PC-9 (cell line): ENCODE measurements at regions of chr1 and their contacts with region 1.

Region 1: DNA sequence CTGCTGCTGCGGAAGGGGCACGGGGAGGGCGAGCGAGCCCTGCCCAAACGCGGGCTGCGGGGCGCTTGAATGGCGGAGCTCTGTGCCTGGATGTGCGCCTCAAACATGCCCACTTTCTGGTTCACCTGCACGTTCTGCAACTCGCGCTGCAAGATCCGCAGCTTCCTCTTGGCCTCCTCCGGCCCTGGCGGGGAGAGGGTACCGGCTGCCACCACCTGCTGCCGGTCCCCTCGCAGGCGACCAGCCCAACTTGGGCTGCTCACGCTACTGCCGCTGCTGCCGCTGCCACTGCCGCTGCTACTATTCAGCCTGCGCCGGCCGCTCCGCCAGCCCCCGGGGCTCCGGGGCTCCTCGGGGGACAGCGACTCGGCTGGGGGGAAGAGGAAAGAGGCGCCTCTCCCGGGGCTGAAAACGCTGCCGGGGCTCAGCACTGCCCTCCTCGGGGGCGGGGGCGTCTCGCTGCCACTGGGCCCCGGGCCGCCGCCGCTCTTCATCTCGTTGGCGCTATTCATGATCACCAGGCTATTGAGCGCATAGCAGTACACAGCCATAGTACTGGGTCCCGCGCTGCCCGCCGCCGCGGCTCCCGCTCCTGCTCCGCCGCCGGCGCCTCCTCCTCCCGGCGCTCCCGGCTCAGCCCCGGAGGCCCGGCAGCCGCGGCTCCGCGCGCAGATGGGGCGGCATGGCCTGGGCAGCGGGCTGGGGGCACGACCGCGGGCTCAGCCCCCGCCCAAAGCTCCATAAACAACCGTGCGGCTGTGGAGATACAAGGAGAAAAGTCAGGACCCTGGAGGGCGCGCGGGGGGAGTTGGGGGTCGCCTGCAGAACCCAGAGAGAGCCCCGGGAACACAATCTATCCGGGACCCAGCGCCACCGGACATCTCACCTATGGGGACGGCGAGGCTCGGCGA is 1.9 kb downstream of the ITPKB start:
- DNase-seq: peak in 1 of 2 experiments; percentile 7
- H3K4me3 ChIP-seq: peak overlapping the region; percentile 92
- H3K27ac ChIP-seq: no peak overlapping the region
- H3K4me1 ChIP-seq: peaks cover 16% of the 10 kb centered on the region
- H3K27me3 ChIP-seq: no peaks in the 10 kb centered on the region
- CTCF ChIP-seq: no peak

Region 2: DNA sequence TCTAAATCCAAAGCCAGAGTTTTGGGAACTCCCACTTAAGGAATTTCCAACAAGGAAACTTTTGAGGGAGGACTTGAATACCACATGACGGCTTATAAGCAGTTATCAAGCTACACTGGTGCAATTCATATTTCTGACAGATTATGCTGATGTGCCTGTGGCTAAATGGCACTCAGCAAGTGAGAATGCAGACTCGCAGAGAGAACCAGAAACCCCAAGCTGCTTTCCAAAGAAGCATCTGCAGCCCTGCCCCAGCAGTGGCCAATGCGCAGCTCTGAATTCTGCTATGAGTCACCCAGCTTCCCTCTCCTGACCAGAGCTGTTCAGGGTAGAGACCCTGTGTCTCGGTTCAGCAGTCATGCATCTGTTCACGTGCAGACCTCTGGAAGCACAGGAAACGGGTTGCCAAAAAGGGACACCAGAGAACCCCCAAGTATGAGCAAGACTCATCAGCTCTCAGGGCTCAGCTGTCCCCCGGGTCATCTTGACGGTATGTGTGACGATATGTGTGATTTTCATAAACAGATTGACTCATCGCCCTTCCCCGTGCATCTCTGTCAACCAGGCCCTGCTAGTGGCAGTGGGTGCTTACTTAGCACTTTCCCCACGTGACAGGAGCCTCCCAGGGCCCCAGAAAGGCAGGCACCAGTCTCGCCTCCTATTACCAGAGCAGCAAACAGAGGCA is 74.4 kb before region 1 on chr1:
- CTCF ChIA-PET with region 1: no interaction called
- POLR2A ChIA-PET with region 1: no interaction called
- intact Hi-C with region 1: loop called (anchors 5 kb)
- DNase-seq: peak; percentile 82 to 92
- H3K4me3 ChIP-seq: peak overlapping the region; percentile 38; the same call in 1 of the 2 replicates
- H3K27ac ChIP-seq: peak overlapping the region; percentile 59
- H3K4me1 ChIP-seq: peaks cover 42% of the 10 kb centered on the region
- H3K27me3 ChIP-seq: no peaks in the 10 kb centered on the region
- CTCF ChIP-seq: no peak

Region 3: DNA sequence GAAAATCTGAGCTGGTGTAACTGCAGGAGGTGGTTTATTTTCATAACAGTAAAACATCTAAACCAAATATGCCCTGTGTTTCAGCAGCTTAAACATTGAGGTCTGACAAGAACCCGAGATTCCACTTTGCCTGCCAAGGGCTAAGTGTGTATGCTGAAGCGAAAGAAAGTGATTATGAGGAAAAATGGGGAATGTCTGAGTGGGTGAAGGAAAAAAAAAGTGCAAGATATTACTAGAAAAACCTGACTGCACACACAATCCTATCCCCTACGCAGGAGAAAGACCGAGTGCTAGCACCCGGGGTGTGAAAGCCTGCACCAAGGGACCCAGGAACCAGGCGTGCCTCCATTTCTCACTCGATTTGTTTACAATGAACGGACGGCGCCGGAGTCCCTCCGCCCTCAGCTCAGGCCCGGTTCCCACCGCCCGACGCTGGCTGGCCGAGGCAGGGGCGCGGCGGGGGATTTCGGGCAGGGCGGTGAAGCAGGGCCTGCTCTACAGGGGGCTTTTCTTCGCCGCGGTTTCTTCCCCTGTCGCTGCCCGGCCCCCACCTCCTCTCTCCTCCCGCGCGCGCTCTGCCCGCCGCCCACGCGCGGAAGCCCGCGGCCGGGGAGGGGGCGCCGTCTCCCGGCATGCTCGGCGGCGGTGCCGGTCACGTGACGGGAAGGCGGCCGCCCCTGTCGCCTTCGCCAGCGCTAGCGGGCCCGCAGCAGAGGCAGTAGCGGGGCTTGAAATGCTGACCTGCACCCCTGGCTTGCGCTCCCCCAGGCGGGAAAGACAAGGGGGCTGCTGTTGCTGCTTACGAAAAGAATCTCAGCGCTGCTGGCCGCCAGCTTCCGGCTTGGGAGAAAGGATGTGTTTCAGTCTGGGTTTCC is 34.0 kb before region 1 on chr1:
- CTCF ChIA-PET with region 1: no interaction called
- POLR2A ChIA-PET with region 1: interaction called, 18 read pairs
- intact Hi-C with region 1: no loop called
- DNase-seq: peak in 1 of 2 experiments; percentile 66
- H3K4me3 ChIP-seq: peak overlapping the region; percentile 83
- H3K27ac ChIP-seq: peak overlapping the region; percentile 62
- H3K4me1 ChIP-seq: peaks cover 14% of the 10 kb centered on the region
- H3K27me3 ChIP-seq: no peaks in the 10 kb centered on the region
- CTCF ChIP-seq: no peak

Region 4: GRCh38 chr1:226814751-226815496 is 77.8 kb after region 1 on chr1:
- CTCF ChIA-PET with region 1: interaction called, 12 read pairs
- POLR2A ChIA-PET with region 1: no interaction called
- intact Hi-C with region 1: loop called (anchors 1 kb)
- DNase-seq: peak; percentile 98 to 99
- H3K4me3 ChIP-seq: peak overlapping the region; percentile 25; the same call in 1 of the 2 replicates
- H3K27ac ChIP-seq: peak overlapping the region; percentile 97
- H3K4me1 ChIP-seq: peaks cover 56% of the 10 kb centered on the region
- H3K27me3 ChIP-seq: no peaks in the 10 kb centered on the region
- CTCF ChIP-seq: no peak

Region 5: DNA sequence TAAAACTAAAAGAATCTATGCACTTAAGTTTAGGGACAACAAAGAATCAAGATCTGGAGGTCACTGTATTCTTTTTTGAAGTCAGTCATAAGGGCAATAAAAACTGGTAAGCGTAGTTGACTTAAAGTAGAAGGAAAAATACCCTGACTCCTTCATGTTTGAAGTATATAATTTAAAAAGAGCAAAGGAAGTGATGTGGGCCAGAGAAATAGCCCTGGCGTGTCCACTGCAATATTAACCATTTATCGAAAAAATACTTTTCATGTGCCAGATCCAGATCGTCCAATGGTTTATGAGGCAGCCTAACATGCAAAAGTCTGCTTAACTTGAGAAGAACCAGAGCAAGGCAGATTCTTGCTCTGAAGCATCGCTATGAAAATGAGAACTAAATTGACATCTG is 364.9 kb after region 1 on chr1:
- CTCF ChIA-PET with region 1: no interaction called
- POLR2A ChIA-PET with region 1: interaction called, 10 read pairs
- intact Hi-C with region 1: no loop called
- DNase-seq: no peak
- H3K4me3 ChIP-seq: no peak overlapping the region
- H3K27ac ChIP-seq: no peak overlapping the region
- H3K4me1 ChIP-seq: no peaks in the 10 kb centered on the region
- H3K27me3 ChIP-seq: no peaks in the 10 kb centered on the region
- CTCF ChIP-seq: no peak